Posterior vena cava (tissue), 2 donors: ENCODE measurements at regions of chr11 and their contacts with region 1.

Region 1: GRCh38 chr11:43895601-43896000 is 15.0 kb downstream of the ALKBH3 start:
- DNase-seq: no peak

Region 2: GRCh38 chr11:44036811-44037657 is 141.4 kb after region 1 on chr11:
- intact Hi-C with region 1: loop called (anchors 2 to 5 kb)
- DNase-seq: peak; percentile 93